ENCODE measurements at regions of chr17 and their contacts with region 1.

Region 1: GRCh38 chr17:49763735-49764558 is at the start of gene FAM117A:
- DNase-seq: peak; percentile 91 to 99 (median 94)
- ATAC-seq: peak; percentile 87
- H3K4me3 ChIP-seq: peak within 1 kb of the TSS; percentile 86
- H3K4me3 Mint-ChIP-seq: peak within 1 kb of the TSS; percentile 95
- H3K27ac ChIP-seq: peak within 1 kb of the TSS; percentile 31 to 67
- H3K27ac Mint-ChIP-seq: peak within 1 kb of the TSS; percentile 76
- H3K4me1 ChIP-seq: peaks cover 43% of the 10 kb centered on the region
- H3K4me1 Mint-ChIP-seq: peaks cover 54% of the 10 kb centered on the region
- H3K27me3 ChIP-seq: no peaks in the 10 kb centered on the region
- H3K27me3 Mint-ChIP-seq: no peaks in the 10 kb centered on the region
- CTCF ChIP-seq: no peak
- total RNA-seq, gene FAM117A: 23.2 to 26.5 TPM

Region 2: GRCh38 chr17:49715717-49716279 is 48.1 kb before region 1 on chr17:
- CTCF ChIA-PET with region 1: interaction called, 67 read pairs
- POLR2A ChIA-PET with region 1: interaction called, 25 read pairs
- intact Hi-C with region 1: loop called in 1 of 2 experiments (anchors 2 kb)
- DNase-seq: peak in 7 of 14 experiments; percentile 20 to 85 (median 39)
- ATAC-seq: peak; percentile 72
- H3K4me3 ChIP-seq: no peak overlapping the region
- H3K4me3 Mint-ChIP-seq: peak overlapping the region; percentile 58
- H3K27ac ChIP-seq: peak overlapping the region; percentile 62 to 86
- H3K27ac Mint-ChIP-seq: peak overlapping the region; percentile 80
- H3K4me1 ChIP-seq: peaks cover 49% of the 10 kb centered on the region
- H3K4me1 Mint-ChIP-seq: peaks cover 34% of the 10 kb centered on the region
- H3K27me3 ChIP-seq: no peaks in the 10 kb centered on the region
- H3K27me3 Mint-ChIP-seq: no peaks in the 10 kb centered on the region
- CTCF ChIP-seq: no peak

Region 3: DNA sequence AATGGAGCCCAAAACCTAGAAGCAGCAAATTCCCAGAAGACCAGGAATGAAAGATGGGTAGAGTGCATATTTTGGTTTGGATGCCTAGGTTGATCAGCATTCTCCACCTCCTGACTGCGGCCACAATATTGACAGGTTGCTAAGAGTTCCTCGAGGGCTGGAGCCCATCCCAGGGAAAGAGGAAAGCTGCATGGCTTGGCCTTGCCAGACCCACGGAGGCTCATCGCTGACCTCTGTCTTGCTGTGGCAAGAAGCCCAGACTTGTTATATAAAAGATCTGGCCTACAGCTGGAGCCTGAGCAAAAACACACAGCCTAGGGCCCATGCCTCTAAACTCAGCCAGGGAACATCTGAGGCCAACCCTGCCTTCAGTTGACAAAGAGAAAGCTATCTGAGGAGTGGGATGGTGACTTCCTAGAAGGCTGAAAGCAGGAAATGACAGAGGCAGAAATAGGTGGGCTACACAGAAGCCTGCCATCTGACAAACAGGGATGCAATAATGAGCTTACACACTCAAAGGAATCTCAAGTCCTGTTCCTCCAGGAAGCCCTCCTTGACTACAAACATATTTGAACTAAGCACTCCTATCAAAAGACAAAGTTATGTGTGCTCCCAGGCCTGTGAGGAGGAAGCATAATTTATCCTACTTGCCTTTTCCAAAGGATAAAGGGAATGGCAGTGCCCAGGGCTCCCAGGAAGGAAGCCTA is 33.7 kb before region 1 on chr17:
- CTCF ChIA-PET with region 1: no interaction called
- POLR2A ChIA-PET with region 1: interaction called, 5 read pairs
- intact Hi-C with region 1: loop called in 1 of 2 experiments (anchors 5 kb)
- DNase-seq: no peak
- ATAC-seq: no peak
- H3K4me3 ChIP-seq: no peak overlapping the region
- H3K4me3 Mint-ChIP-seq: no peak overlapping the region
- H3K27ac ChIP-seq: peak overlapping the region in 1 of 2 donors; percentile 7
- H3K27ac Mint-ChIP-seq: peak overlapping the region; percentile 58
- H3K4me1 ChIP-seq: peaks cover 63% of the 10 kb centered on the region
- H3K4me1 Mint-ChIP-seq: peaks cover 59% of the 10 kb centered on the region
- H3K27me3 ChIP-seq: no peaks in the 10 kb centered on the region
- H3K27me3 Mint-ChIP-seq: no peaks in the 10 kb centered on the region
- CTCF ChIP-seq: no peak

Region 4: DNA sequence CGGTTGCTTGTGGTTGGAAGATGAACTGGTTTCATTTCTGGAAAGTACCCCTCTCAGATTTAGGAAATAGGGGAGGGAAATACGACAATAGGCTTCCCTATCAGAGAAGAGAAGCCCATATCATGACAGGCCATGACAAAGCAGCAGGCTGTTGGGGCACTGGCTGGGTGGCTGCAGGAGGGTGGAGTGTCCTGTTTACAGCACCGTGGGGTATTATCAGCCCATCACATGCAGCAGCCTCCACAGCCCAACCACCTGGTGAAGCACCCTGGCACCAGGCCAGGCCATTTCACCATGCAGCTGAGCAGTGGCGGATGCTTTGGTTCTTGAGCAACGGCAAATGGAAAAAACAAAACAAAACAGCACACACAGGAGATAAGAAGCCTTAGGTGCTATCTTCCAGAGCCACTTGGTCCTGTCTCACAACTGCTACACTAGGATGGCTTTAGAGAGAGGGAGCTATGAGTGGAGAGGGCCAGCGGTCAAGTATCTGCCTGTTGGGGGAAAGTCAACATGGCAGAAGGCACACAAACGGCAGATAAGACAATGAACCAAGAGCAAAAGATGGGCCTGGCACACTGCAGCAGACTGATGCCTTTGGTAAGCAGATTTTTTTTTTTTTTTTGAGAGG is 24.2 kb before region 1 on chr17:
- CTCF ChIA-PET with region 1: interaction called, 21 read pairs
- POLR2A ChIA-PET with region 1: interaction called, 253 read pairs
- intact Hi-C with region 1: loop called (anchors 1 to 5 kb)
- DNase-seq: peak; percentile 91 to 99 (median 98)
- ATAC-seq: peak; percentile 95
- H3K4me3 ChIP-seq: peak overlapping the region; percentile 54
- H3K4me3 Mint-ChIP-seq: peak overlapping the region; percentile 94
- H3K27ac ChIP-seq: peak overlapping the region; percentile 88 to 94
- H3K27ac Mint-ChIP-seq: peak overlapping the region; percentile 99
- H3K4me1 ChIP-seq: peaks cover 89% of the 10 kb centered on the region
- H3K4me1 Mint-ChIP-seq: peaks cover 80% of the 10 kb centered on the region
- H3K27me3 ChIP-seq: no peaks in the 10 kb centered on the region
- H3K27me3 Mint-ChIP-seq: no peaks in the 10 kb centered on the region
- CTCF ChIP-seq: no peak

Region 5: DNA sequence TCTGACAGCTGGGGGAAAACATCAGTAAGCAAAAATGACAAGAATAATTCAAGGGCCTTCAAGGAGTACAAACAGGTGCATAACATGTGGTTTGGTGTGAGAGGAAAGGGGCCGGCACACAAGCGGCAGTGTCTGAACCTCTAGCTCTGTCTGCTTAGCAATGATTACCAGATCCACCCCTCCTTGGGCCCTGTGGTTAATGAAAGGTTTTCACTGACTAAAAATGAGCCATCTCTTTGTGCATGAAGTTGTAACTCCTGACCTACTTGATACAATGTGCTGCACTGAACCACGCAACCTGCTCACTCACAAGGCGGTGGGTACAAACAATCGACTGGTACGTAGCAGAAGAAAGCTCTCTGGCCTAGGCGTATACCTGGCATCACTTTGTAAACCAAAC is 15.2 kb before region 1 on chr17:
- CTCF ChIA-PET with region 1: interaction called, 17 read pairs
- POLR2A ChIA-PET with region 1: interaction called, 253 read pairs
- intact Hi-C with region 1: loop called (anchors 1 to 2 kb)
- DNase-seq: peak; percentile 25 to 87 (median 52)
- ATAC-seq: peak; percentile 76
- H3K4me3 ChIP-seq: no peak overlapping the region
- H3K4me3 Mint-ChIP-seq: peak overlapping the region; percentile 72
- H3K27ac ChIP-seq: peak overlapping the region; percentile 87 to 94
- H3K27ac Mint-ChIP-seq: peak overlapping the region; percentile 97
- H3K4me1 ChIP-seq: peaks cover 90% of the 10 kb centered on the region
- H3K4me1 Mint-ChIP-seq: peaks cover 77% of the 10 kb centered on the region
- H3K27me3 ChIP-seq: no peaks in the 10 kb centered on the region
- H3K27me3 Mint-ChIP-seq: no peaks in the 10 kb centered on the region
- CTCF ChIP-seq: no peak

Region 6: GRCh38 chr17:49815761-49816281 is 51.9 kb after region 1 on chr17:
- CTCF ChIA-PET with region 1: no interaction called
- POLR2A ChIA-PET with region 1: interaction called, 17 read pairs
- intact Hi-C with region 1: no loop called
- DNase-seq: no peak
- ATAC-seq: no peak
- H3K4me3 ChIP-seq: no peak overlapping the region
- H3K4me3 Mint-ChIP-seq: no peak overlapping the region
- H3K27ac ChIP-seq: peak overlapping the region in 1 of 2 donors; percentile 43
- H3K27ac Mint-ChIP-seq: peak overlapping the region; percentile 96
- H3K4me1 ChIP-seq: peaks cover 51% of the 10 kb centered on the region
- H3K4me1 Mint-ChIP-seq: peaks cover 73% of the 10 kb centered on the region
- H3K27me3 ChIP-seq: no peaks in the 10 kb centered on the region
- H3K27me3 Mint-ChIP-seq: no peaks in the 10 kb centered on the region
- CTCF ChIP-seq: no peak

Measured in CD4-positive, alpha-beta T cell (primary cell).